Activated B cell treated with CpG ODN at 0.5 μM for 24 hours (primary cell): ENCODE measurements at regions of chr12 and their contacts with region 1.

Region 1: DNA sequence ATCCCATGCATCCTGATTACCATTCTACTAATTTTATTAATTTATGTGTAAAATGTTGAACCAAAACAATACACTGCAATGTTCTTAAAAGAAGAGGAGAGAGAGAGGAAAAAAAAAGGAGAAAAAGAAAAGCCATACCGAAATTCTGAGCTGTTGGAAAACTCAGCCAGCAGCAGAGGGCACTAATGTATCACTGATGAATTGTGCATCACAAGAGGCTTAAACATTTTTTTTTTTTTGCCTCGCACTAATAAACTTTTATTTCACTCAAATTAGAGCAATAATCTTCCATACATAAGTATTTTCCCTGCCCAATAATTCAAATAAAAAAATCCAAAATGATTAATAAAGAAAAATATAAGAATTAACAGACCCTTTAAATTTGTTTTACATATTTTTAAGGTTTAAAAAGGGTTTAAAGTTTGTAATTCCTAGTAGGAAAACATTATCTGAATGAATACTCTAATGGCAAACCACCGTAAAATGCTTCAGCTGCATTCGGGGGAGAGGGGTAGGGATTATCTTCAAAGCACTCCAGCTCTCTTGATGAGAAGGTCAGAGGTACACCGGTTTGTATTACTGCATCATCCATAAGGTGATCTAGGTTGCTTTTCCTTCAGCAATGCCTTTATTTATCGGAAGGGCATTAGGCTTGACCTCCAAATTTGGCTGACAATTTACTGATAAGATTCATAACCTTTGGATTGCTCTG is 41.9 kb downstream of the ATP23 start:
- DNase-seq: no peak
- ATAC-seq: no peak
- H3K4me3 Mint-ChIP-seq: no peak overlapping the region
- H3K27ac Mint-ChIP-seq: no peak overlapping the region
- H3K4me1 Mint-ChIP-seq: no peaks in the 10 kb centered on the region
- H3K27me3 Mint-ChIP-seq: peaks cover 10% of the 10 kb centered on the region
- CTCF ChIP-seq: no peak

Region 2: DNA sequence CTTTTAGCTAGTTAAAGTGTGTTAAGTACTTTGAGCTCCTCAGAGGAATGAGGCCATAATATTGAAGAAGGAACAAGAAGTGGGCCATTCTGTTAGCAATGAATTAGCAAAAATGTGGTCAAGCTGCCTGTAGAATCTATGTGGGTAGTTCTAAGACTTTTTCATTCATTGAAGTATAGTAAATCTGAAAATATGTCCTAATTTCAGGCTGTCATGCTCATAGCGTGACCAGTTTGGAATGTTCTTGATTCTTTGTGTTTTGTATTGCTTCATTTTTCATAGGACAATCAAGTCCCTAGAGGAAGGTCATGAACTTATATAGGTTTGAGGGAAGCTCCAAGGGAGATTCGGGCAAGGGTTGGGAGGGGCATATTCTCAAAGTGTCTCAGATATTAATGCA is 30.5 kb before region 1 on chr12:
- CTCF ChIA-PET with region 1: no interaction called
- POLR2A ChIA-PET with region 1: no interaction called
- intact Hi-C with region 1: no loop called
- DNase-seq: no peak
- ATAC-seq: no peak
- H3K4me3 Mint-ChIP-seq: no peak overlapping the region
- H3K27ac Mint-ChIP-seq: no peak overlapping the region
- H3K4me1 Mint-ChIP-seq: no peaks in the 10 kb centered on the region
- H3K27me3 Mint-ChIP-seq: no peaks in the 10 kb centered on the region
- CTCF ChIP-seq: no peak

Region 3: DNA sequence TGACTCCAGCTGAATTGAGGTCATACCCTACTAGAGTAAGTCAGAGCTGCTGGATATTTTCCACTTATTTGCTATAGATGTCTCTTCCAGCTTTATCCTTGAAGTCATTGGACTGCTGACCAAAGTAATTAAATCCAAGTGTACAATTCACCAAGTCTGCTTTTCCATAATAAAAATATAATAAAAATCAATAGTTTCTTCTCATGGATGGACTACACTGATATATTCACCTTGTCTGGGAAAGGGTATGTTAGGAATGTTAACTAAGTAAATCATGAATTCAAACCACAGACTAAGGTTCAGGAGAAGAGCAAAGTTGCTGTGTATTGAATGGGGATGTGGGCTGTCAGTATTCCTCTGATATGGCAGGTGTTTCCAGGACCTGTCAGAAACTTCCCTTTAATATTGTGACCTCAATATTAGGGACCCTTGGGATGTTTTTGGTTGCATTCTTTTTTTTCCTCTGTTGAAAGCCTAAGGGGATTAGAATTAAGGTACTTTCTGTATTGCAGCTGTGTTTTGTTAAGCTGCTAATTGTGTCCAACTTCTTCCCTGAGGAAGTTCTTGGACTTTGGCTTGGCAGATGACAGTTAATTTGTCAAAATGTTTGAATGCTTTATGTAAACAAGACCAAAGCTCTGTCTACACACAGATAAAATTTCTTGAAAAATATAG is 242.0 kb after region 1 on chr12:
- CTCF ChIA-PET with region 1: no interaction called
- POLR2A ChIA-PET with region 1: no interaction called
- intact Hi-C with region 1: no loop called
- DNase-seq: no peak
- ATAC-seq: no peak
- H3K4me3 Mint-ChIP-seq: no peak overlapping the region
- H3K27ac Mint-ChIP-seq: no peak overlapping the region
- H3K4me1 Mint-ChIP-seq: no peaks in the 10 kb centered on the region
- H3K27me3 Mint-ChIP-seq: peaks cover 4% of the 10 kb centered on the region
- CTCF ChIP-seq: no peak

Region 4: GRCh38 chr12:58346032-58346632 is 362.8 kb after region 1 on chr12:
- CTCF ChIA-PET with region 1: no interaction called
- POLR2A ChIA-PET with region 1: no interaction called
- intact Hi-C with region 1: loop called (anchors 10 kb)
- DNase-seq: no peak
- ATAC-seq: no peak
- H3K4me3 Mint-ChIP-seq: no peak overlapping the region
- H3K27ac Mint-ChIP-seq: no peak overlapping the region
- H3K4me1 Mint-ChIP-seq: peaks cover 6% of the 10 kb centered on the region
- H3K27me3 Mint-ChIP-seq: peaks cover 4% of the 10 kb centered on the region
- CTCF ChIP-seq: peak; percentile 95

Region 5: DNA sequence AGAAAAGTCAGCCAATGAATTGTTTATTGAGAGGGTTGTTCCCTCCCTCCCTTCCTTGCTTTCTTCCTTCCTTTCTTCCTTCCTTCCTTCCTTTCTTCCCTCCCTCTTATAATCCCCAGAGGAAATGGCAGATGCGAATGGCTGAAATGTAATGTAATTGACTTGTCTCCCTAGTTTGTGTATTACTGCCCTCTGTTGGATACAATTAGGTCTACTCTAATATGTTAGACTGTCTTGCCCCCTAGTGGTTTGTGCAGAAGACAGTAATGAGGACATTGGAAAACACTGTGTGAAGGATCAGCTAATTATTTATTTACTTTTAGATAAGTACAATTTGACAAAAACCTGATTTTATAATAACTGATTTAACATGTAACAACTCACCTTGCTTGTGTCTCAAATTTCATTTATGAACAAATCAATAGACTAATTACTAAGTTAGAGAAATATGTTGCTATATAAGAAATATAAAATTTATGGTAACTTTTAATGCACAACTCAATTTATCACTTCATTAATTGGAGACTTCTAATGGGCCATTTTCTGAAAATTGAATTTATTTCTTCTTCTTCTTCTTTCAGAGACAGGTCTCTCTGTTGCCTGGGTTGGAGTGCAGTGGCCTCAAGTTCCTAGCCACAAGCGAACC is 1166.8 kb after region 1 on chr12:
- CTCF ChIA-PET with region 1: interaction called, 4 read pairs
- POLR2A ChIA-PET with region 1: no interaction called
- intact Hi-C with region 1: loop called (anchors 5 kb)
- DNase-seq: no peak
- ATAC-seq: peak; percentile 49
- H3K4me3 Mint-ChIP-seq: no peak overlapping the region
- H3K27ac Mint-ChIP-seq: no peak overlapping the region
- H3K4me1 Mint-ChIP-seq: no peaks in the 10 kb centered on the region
- H3K27me3 Mint-ChIP-seq: no peaks in the 10 kb centered on the region
- CTCF ChIP-seq: no peak